Tibial artery (tissue), 4 donors: ENCODE measurements at regions of chr11 and their contacts with region 1.

Region 1: DNA sequence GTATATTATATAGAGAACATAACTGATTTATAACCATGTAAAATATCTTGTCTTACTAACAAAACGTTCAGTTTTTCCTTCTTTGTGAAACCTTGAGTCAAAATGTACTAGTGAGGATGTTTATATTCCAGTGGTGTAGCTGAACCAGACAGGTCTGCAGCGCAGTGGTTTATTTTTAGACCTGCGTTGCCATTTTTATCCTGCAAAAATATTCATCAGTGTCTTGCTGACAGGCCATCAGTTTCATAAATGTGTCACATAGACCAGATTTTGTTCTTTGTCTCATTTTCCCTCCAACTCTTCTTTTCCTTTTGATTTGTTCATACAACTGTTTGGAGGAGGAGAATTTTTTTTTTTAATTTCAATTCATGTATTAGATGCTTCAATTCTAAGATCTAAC is 43.1 kb downstream of the HSD17B12 start:
- DNase-seq: no peak
- H3K4me3 ChIP-seq: no peak overlapping the region
- H3K27ac ChIP-seq: no peak overlapping the region
- H3K4me1 ChIP-seq: peaks cover 0 to 32% (median 2%) of the 10 kb centered on the region in 4 donors
- H3K27me3 ChIP-seq: no peaks in the 10 kb centered on the region
- CTCF ChIP-seq: no peak

Region 2: DNA sequence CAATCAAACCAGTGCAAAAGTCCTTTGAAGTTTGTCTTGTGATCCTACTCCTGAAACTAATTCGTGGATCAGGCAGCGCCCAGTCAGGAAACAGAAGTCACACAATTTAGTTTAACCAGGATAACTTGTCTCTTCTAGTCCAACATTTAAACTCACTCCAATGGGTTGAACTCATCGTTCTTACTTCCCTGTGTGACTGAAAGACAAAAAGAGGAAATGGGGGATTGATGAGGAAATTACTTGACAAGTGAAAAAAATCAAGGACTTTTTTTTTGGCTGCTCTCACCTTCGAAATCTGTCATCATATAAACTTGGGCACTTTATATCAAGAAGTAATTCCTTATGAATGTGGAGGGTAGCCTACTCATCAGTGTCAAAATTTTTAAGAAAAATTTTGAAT is 35.3 kb after region 1 on chr11:
- intact Hi-C with region 1: loop called (anchors 2 kb)
- DNase-seq: no peak
- H3K4me3 ChIP-seq: no peak overlapping the region
- H3K27ac ChIP-seq: no peak overlapping the region
- H3K4me1 ChIP-seq: no peaks in the 10 kb centered on the region
- H3K27me3 ChIP-seq: no peaks in the 10 kb centered on the region
- CTCF ChIP-seq: no peak

Region 3: GRCh38 chr11:43788421-43788820 is 64.8 kb after region 1 on chr11:
- intact Hi-C with region 1: no loop called
- DNase-seq: peak in 1 of 2 donors; percentile 33
- H3K4me3 ChIP-seq: no peak overlapping the region
- H3K27ac ChIP-seq: no peak overlapping the region
- H3K4me1 ChIP-seq: peaks cover 0 to 16% (median 4%) of the 10 kb centered on the region in 4 donors
- H3K27me3 ChIP-seq: no peaks in the 10 kb centered on the region
- CTCF ChIP-seq: no peak